ENCODE measurements at regions of chr6 and their contacts with region 1.

Region 1: GRCh38 chr6:85756982-85757381 is 114.3 kb upstream of the SYNCRIP start:
- DNase-seq: peak; percentile 43
- H3K4me3 ChIP-seq: no peak overlapping the region
- H3K27ac ChIP-seq: no peak overlapping the region
- H3K4me1 ChIP-seq: no peaks in the 10 kb centered on the region
- H3K27me3 ChIP-seq: no peaks in the 10 kb centered on the region
- CTCF ChIP-seq: peak in 1 of 2 donors; percentile 11
- POLR2A ChIP-seq: no peak

Region 2: DNA sequence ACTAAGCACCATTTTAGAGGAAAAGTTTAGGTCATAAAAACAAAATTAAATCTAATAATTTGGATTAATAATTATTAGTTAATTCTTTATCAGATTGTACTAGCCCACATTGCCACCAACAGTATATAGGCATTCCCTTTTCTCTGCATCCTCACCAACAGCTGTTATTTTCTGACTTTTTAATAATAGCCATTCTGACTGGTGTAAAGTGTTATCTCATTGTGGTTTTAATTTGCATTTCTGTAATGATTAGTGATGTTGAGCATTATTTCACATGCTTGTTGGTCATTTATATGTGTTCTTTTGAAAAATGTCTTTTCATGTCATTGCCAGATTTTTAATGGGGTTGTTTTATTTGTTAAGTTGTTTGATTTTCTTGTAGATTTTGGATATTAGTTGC is 204.8 kb after region 1 on chr6:
- CTCF ChIA-PET with region 1: no interaction called
- POLR2A ChIA-PET with region 1: no interaction called
- dilution Hi-C with region 1: no loop called
- intact Hi-C with region 1: no loop called
- DNase-seq: no peak
- H3K4me3 ChIP-seq: no peak overlapping the region
- H3K27ac ChIP-seq: no peak overlapping the region
- H3K4me1 ChIP-seq: no peaks in the 10 kb centered on the region
- H3K27me3 ChIP-seq: no peaks in the 10 kb centered on the region
- CTCF ChIP-seq: no peak
- POLR2A ChIP-seq: no peak

Region 3: DNA sequence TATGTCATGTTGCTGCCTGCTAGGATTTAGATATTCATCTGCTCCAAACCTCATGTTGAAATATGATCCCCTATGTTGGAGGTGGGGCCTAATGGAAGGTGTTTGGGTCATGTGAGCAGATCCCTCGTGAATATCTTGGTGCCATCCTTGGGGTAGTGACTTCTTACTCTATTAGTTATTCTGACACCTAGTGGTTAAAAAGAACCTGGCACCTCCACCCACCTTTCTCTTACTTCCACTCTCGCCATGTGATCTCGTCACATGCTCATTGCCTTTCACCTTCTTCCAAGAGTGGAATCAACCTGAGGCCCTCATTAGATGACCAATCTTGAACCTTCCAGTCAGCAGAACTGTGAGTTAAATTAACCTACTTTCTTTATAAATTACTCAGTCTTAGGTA is 435.1 kb after region 1 on chr6:
- CTCF ChIA-PET with region 1: no interaction called
- POLR2A ChIA-PET with region 1: no interaction called
- dilution Hi-C with region 1: no loop called
- intact Hi-C with region 1: loop called (anchors 1 kb)
- DNase-seq: peak; percentile 15
- H3K4me3 ChIP-seq: no peak overlapping the region
- H3K27ac ChIP-seq: no peak overlapping the region
- H3K4me1 ChIP-seq: no peaks in the 10 kb centered on the region
- H3K27me3 ChIP-seq: no peaks in the 10 kb centered on the region
- CTCF ChIP-seq: peak; percentile 9 to 18
- POLR2A ChIP-seq: no peak

Region 4: GRCh38 chr6:86856937-86857563 is 1100.1 kb after region 1 on chr6:
- CTCF ChIA-PET with region 1: interaction called, 29 read pairs
- POLR2A ChIA-PET with region 1: no interaction called
- dilution Hi-C with region 1: no loop called
- intact Hi-C with region 1: no loop called
- DNase-seq: peak; percentile 43
- H3K4me3 ChIP-seq: no peak overlapping the region
- H3K27ac ChIP-seq: no peak overlapping the region
- H3K4me1 ChIP-seq: no peaks in the 10 kb centered on the region
- H3K27me3 ChIP-seq: no peaks in the 10 kb centered on the region
- CTCF ChIP-seq: peak; percentile 39 to 56
- POLR2A ChIP-seq: no peak

Region 5: GRCh38 chr6:86937219-86938079 is 1180.5 kb after region 1 on chr6 and contains the start of gene HTR1E:
- CTCF ChIA-PET with region 1: interaction called, 12 read pairs
- POLR2A ChIA-PET with region 1: no interaction called
- dilution Hi-C with region 1: no loop called
- intact Hi-C with region 1: loop called (anchors 10 kb)
- DNase-seq: peak; percentile 36
- H3K4me3 ChIP-seq: no peak within 1 kb of the TSS
- H3K27ac ChIP-seq: no peak within 1 kb of the TSS
- H3K4me1 ChIP-seq: no peaks in the 10 kb centered on the region
- H3K27me3 ChIP-seq: peaks cover 20 to 29% of the 10 kb centered on the region in 2 experiments
- CTCF ChIP-seq: peak; percentile 44 to 57
- POLR2A ChIP-seq: no peak
- total RNA-seq, gene HTR1E: not detected in 2 replicates

Region 6: GRCh38 chr6:87029711-87030314 is 1272.8 kb after region 1 on chr6:
- CTCF ChIA-PET with region 1: interaction called, 9 read pairs
- POLR2A ChIA-PET with region 1: no interaction called
- dilution Hi-C with region 1: no loop called
- intact Hi-C with region 1: loop called (anchors 1 kb)
- DNase-seq: peak; percentile 53
- H3K4me3 ChIP-seq: no peak overlapping the region
- H3K27ac ChIP-seq: no peak overlapping the region
- H3K4me1 ChIP-seq: no peaks in the 10 kb centered on the region
- H3K27me3 ChIP-seq: no peaks in the 10 kb centered on the region
- CTCF ChIP-seq: peak; percentile 35 to 51
- POLR2A ChIP-seq: no peak

Measured in endothelial cell of umbilical vein (primary cell).